GM12878 (cell line): ENCODE measurements at regions of chr2 and their contacts with region 1.

Region 1: GRCh38 chr2:714005-714741 is 37.0 kb upstream of the TMEM18 start:
- DNase-seq: peak; percentile 86
- ATAC-seq: peak; percentile 99
- H3K4me3 ChIP-seq: no peak overlapping the region
- H3K27ac ChIP-seq: no peak overlapping the region
- H3K4me1 ChIP-seq: peaks cover 11% of the 10 kb centered on the region
- H3K27me3 ChIP-seq: no peaks in the 10 kb centered on the region
- CTCF ChIP-seq: peak; percentile 81 to 84 (median 83)
- EP300 ChIP-seq: no peak
- POLR2A ChIP-seq: no peak
- RAD21 ChIP-seq: peak; percentile 89

Region 2: GRCh38 chr2:726204-726603 is 12.0 kb after region 1 on chr2:
- CTCF ChIA-PET with region 1: interaction called, 32 read pairs
- POLR2A ChIA-PET with region 1: no interaction called
- RAD21 ChIA-PET with region 1: interaction called, 20 read pairs
- SMC1A ChIA-PET with region 1: interaction called, 26 read pairs
- in situ Hi-C with region 1: no loop called
- intact Hi-C with region 1: loop called (anchors 1 kb)
- DNase-seq: peak; percentile 41
- ATAC-seq: peak; percentile 92
- H3K4me3 ChIP-seq: peak overlapping the region; percentile 1; the same call in 1 of the 2 replicates
- H3K27ac ChIP-seq: peak overlapping the region; percentile 53
- H3K4me1 ChIP-seq: peaks cover 13% of the 10 kb centered on the region
- H3K27me3 ChIP-seq: no peaks in the 10 kb centered on the region
- CTCF ChIP-seq: no peak
- EP300 ChIP-seq: no peak
- POLR2A ChIP-seq: no peak
- RAD21 ChIP-seq: no peak

Region 3: DNA sequence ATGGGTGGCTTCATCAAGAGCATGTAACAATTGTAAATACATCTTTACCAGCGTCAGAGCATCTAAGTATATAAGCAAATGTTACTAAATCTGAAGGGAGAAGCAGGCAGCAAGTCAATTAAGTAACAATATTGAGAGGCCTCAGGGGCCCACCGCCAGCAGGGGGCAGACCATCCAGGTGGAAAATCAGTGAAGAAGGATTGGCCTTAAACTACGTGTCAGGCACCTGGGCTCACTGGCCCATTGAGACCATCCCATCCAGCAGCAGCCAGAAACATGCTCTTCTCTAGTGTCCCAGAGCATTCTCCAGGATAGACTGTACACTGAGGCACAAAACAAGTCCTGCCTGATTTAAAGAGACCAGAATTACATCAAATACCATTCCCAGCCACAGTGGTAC is 140.3 kb after region 1 on chr2:
- CTCF ChIA-PET with region 1: interaction called, 3 read pairs
- POLR2A ChIA-PET with region 1: no interaction called
- RAD21 ChIA-PET with region 1: no interaction called
- SMC1A ChIA-PET with region 1: no interaction called
- in situ Hi-C with region 1: no loop called
- intact Hi-C with region 1: loop called (anchors 5 kb)
- DNase-seq: no peak
- ATAC-seq: peak; percentile 70
- H3K4me3 ChIP-seq: no peak overlapping the region
- H3K27ac ChIP-seq: no peak overlapping the region
- H3K4me1 ChIP-seq: no peaks in the 10 kb centered on the region
- H3K27me3 ChIP-seq: no peaks in the 10 kb centered on the region
- CTCF ChIP-seq: peak; percentile 40 to 58 (median 53); a peak in 5 of 6 replicates
- EP300 ChIP-seq: no peak
- POLR2A ChIP-seq: no peak
- RAD21 ChIP-seq: peak; percentile 52

Region 4: GRCh38 chr2:898319-898718 is 184.1 kb after region 1 on chr2:
- CTCF ChIA-PET with region 1: no interaction called
- POLR2A ChIA-PET with region 1: no interaction called
- RAD21 ChIA-PET with region 1: interaction called, 3 read pairs
- SMC1A ChIA-PET with region 1: no interaction called
- in situ Hi-C with region 1: no loop called
- intact Hi-C with region 1: loop called (anchors 1 kb)
- DNase-seq: no peak
- ATAC-seq: peak; percentile 73
- H3K4me3 ChIP-seq: no peak overlapping the region
- H3K27ac ChIP-seq: no peak overlapping the region
- H3K4me1 ChIP-seq: no peaks in the 10 kb centered on the region
- H3K27me3 ChIP-seq: no peaks in the 10 kb centered on the region
- CTCF ChIP-seq: peak in 2 of 3 experiments; percentile 23 to 37; a peak in 4 of 6 replicates
- EP300 ChIP-seq: no peak
- POLR2A ChIP-seq: no peak
- RAD21 ChIP-seq: peak; percentile 34; the same call in 1 of the 2 replicates

Region 5: DNA sequence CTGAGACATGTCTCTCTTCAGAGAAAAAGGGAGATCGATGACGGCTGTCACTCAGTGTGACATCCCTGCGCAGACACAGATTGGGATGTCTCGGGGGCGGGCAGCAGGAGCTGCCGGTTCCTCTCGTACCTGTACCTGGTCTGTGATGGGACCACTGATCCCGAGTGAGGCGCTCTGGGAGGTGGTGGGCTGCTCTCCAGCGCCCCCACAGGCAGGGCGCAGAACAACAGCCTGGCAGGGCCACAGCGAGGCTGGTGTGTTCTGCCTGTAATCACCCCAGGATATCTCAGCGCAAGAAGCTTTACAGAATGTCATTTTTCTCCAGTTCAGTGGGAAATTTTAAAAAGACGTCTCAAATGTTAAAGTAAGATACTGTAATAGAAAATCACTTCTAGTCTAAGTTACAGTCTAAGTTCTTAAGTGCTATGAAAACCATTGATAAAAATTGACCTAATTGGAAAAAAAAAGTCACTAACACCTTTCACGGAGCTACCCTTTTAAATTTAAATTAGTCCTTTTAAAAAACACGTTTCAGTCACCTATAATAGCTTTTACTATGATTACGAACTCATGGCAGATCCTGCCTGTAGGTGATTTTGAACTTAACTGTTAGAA is 426.3 kb after region 1 on chr2:
- CTCF ChIA-PET with region 1: no interaction called
- POLR2A ChIA-PET with region 1: no interaction called
- RAD21 ChIA-PET with region 1: no interaction called
- SMC1A ChIA-PET with region 1: no interaction called
- in situ Hi-C with region 1: no loop called
- intact Hi-C with region 1: loop called (anchors 10 kb)
- DNase-seq: no peak
- ATAC-seq: peak; percentile 86
- H3K4me3 ChIP-seq: no peak overlapping the region
- H3K27ac ChIP-seq: no peak overlapping the region
- H3K4me1 ChIP-seq: no peaks in the 10 kb centered on the region
- H3K27me3 ChIP-seq: no peaks in the 10 kb centered on the region
- CTCF ChIP-seq: peak; percentile 54 to 87 (median 76)
- EP300 ChIP-seq: no peak
- POLR2A ChIP-seq: no peak
- RAD21 ChIP-seq: no peak

Region 6: DNA sequence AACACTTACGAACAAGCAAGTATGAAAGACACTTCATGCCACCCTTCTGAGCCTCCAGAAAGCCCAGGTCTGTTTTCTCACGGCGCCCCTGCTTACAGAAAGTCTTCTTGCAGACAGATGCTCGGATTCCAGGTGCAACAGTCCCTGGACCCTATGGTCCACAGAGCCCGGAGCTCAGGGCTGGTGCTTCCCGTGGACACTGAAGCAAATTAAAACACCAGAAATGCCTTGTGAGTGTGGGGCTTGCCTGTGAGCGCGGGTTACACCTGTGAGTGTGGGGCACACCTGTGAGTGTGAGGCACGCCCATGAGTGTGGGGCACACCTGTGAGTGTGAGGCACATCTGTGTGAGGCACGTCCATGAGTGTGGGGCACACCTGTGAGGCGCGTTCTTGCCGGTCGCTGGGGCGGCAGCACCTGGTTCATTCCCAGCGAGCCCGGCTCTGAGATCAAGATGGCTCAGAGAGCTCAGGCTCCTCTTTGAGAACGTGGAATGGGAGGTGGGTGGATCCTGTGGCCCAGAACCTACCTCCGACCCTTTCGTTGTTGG is 493.9 kb after region 1 on chr2:
- CTCF ChIA-PET with region 1: no interaction called
- POLR2A ChIA-PET with region 1: no interaction called
- RAD21 ChIA-PET with region 1: no interaction called
- SMC1A ChIA-PET with region 1: no interaction called
- in situ Hi-C with region 1: no loop called
- intact Hi-C with region 1: no loop called
- DNase-seq: no peak
- ATAC-seq: no peak
- H3K4me3 ChIP-seq: no peak overlapping the region
- H3K27ac ChIP-seq: no peak overlapping the region
- H3K4me1 ChIP-seq: no peaks in the 10 kb centered on the region
- H3K27me3 ChIP-seq: no peaks in the 10 kb centered on the region
- CTCF ChIP-seq: no peak
- EP300 ChIP-seq: no peak
- POLR2A ChIP-seq: no peak
- RAD21 ChIP-seq: no peak

Region 7: GRCh38 chr2:1550658-1551316 is 836.6 kb after region 1 on chr2:
- CTCF ChIA-PET with region 1: interaction called, 8 read pairs
- POLR2A ChIA-PET with region 1: no interaction called
- RAD21 ChIA-PET with region 1: interaction called, 10 read pairs
- SMC1A ChIA-PET with region 1: interaction called, 6 read pairs
- in situ Hi-C with region 1: loop called (anchors 5 kb)
- intact Hi-C with region 1: loop called (anchors 1 kb)
- DNase-seq: no peak
- ATAC-seq: peak; percentile 97
- H3K4me3 ChIP-seq: no peak overlapping the region
- H3K27ac ChIP-seq: no peak overlapping the region
- H3K4me1 ChIP-seq: no peaks in the 10 kb centered on the region
- H3K27me3 ChIP-seq: no peaks in the 10 kb centered on the region
- CTCF ChIP-seq: peak; percentile 75 to 92 (median 90)
- EP300 ChIP-seq: no peak
- POLR2A ChIP-seq: no peak
- RAD21 ChIP-seq: peak; percentile 61